Activated CD4-positive, alpha-beta T cell treated with anti-CD3 and anti-CD28 coated beads for 36 hours (primary cell): ENCODE measurements at regions of chr7 and their contacts with region 1.

Region 1: DNA sequence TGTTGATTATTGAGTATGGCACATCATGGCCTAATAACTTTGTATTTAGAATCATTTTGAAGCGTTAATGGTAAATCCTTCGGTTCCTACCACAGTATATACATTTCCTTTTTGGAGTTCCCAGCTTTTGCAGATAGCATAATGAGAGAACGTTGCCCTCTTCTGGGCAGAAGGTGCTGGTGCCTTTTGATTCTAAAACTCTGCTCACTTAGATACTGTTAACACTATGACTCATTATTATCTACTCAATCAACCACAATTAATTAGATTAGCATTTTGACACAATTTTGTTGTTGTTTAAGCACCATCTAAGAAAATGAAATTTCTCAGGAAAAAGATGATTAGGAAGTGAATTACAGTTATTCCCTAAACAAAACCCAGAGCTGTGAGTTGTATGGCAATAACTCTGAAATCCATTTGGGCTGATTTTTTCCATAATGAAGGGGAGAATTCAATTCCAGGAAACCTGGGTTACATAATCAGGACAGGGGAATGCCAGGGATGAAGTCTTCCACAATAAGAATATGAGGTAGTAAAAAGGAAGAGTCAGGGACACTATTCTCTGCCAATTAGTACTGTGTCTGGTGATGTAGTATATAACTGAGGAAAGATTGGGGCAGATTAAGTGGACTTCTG is 11.5 kb upstream of the DLD start:
- DNase-seq: peak; percentile 51
- ATAC-seq: peak; percentile 71
- H3K4me3 Mint-ChIP-seq: no peak overlapping the region
- H3K27ac Mint-ChIP-seq: no peak overlapping the region
- H3K4me1 Mint-ChIP-seq: peaks cover 28% of the 10 kb centered on the region
- H3K27me3 Mint-ChIP-seq: peaks cover 5% of the 10 kb centered on the region

Region 2: DNA sequence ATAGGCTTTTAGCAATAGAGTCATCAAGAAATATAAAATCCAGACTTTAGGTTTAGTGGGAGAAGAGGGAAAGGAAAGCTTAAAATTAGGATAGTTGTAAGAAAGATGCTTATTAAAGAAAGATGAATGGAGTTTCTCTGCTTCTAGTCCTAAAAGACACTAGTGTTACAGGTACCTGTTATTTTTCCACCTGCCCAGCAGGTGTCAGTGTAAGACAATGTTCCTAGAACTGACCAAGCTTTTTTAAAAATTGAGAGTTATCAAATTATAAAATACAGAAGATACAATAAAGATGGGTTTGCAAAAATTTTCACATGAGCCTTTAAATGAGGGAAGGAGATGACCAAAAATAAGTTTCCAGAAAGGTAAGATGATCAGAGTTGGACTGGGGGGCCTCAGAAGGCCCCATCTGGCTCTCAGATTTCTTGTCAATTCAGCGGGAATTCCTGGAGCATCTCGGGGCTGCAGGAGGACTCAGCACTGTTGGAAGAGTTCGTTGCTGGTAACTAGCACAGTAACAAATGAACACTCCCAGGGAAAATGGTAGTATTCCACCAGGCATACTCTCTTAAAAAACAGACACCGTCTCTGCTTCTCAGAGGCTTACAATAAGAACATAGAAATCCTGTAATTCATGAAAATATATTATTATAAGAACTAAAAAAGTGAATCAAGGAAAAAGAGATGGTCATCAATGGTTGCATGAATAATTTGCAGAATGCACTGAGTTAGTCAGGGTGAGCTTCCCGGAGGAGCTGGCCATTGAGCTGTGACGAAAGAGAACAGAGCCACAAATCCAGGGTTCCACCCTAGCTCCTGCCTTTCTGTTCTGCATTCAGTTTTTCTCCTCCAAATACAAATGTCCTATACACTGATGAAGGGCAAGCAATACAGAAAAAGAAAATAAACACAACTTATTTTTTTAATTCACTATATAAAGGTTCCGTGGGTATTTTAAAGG is 1086.2 kb before region 1 on chr7:
- CTCF ChIA-PET with region 1: no interaction called
- POLR2A ChIA-PET with region 1: no interaction called
- intact Hi-C with region 1: loop called in 1 of 2 experiments (anchors 5 kb)
- DNase-seq: peak; percentile 55
- ATAC-seq: peak; percentile 44
- H3K4me3 Mint-ChIP-seq: no peak overlapping the region
- H3K27ac Mint-ChIP-seq: no peak overlapping the region
- H3K4me1 Mint-ChIP-seq: no peaks in the 10 kb centered on the region
- H3K27me3 Mint-ChIP-seq: no peaks in the 10 kb centered on the region

Region 3: GRCh38 chr7:107462740-107463444 is 416.6 kb before region 1 on chr7:
- CTCF ChIA-PET with region 1: interaction called, 12 read pairs
- POLR2A ChIA-PET with region 1: no interaction called
- intact Hi-C with region 1: loop called (anchors 1 to 5 kb)
- DNase-seq: peak; percentile 65
- ATAC-seq: peak; percentile 88
- H3K4me3 Mint-ChIP-seq: no peak overlapping the region
- H3K27ac Mint-ChIP-seq: no peak overlapping the region
- H3K4me1 Mint-ChIP-seq: no peaks in the 10 kb centered on the region
- H3K27me3 Mint-ChIP-seq: no peaks in the 10 kb centered on the region

Region 4: DNA sequence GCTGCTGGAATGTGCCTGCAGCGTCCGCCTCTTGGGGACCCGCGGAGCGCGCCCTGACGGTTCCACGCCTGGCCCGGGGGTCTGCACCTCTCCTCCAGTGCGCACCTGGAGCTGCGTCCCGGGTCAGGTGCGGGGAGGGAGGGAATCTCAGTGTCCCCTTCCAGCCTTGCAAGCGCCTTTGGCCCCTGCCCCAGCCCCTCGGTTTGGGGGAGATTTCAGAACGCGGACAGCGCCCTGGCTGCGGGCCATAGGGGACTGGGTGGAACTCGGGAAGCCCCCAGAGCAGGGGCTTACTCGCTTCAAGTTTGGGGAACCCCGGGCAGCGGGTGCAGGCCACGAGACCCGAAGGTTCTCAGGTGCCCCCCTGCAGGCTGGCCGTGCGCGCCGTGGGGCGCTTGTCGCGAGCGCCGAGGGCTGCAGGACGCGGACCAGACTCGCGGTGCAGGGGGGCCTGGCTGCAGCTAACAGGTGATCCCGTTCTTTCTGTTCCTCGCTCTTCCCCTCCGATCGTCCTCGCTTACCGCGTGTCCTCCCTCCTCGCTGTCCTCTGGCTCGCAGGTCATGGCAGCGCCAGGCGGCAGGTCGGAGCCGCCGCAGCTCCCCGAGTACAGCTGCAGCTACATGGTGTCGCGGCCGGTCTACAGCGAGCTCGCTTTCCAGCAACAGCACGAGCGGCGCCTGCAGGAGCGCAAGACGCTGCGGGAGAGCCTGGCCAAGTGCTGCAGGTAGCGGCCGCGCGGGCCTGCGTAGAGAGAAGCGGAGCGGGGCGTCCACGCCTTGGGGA is 218.2 kb before region 1 on chr7:
- CTCF ChIA-PET with region 1: interaction called, 4 read pairs
- POLR2A ChIA-PET with region 1: no interaction called
- intact Hi-C with region 1: loop called in 1 of 2 experiments (anchors 2 kb)
- DNase-seq: peak; percentile 77
- ATAC-seq: peak; percentile 43
- H3K4me3 Mint-ChIP-seq: peak overlapping the region; percentile 78
- H3K27ac Mint-ChIP-seq: peak overlapping the region; percentile 82
- H3K4me1 Mint-ChIP-seq: peaks cover 31% of the 10 kb centered on the region
- H3K27me3 Mint-ChIP-seq: peaks cover 21% of the 10 kb centered on the region

Region 5: DNA sequence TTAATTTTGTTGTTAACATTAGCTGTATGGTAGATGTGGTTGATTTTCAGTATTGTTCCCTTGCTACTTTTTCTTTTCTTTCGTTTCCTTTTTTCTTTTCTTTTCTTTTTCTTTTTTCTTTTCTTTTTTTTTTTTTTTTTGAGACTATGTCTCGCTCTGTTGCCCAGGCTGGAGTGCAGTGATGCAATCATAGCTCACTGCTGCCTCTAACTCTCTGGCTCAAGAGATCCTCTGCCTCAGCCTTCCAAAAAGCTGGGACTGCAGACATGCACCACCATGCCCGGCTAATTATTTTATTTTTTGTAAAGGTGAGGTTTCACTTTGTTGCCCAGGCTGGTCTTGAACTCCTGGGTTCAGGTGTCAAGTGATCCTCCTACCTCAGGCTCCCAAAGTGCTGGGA is 90.9 kb before region 1 on chr7:
- CTCF ChIA-PET with region 1: interaction called, 4 read pairs
- POLR2A ChIA-PET with region 1: interaction called, 10 read pairs
- intact Hi-C with region 1: no loop called
- DNase-seq: no peak
- ATAC-seq: no peak
- H3K4me3 Mint-ChIP-seq: no peak overlapping the region
- H3K27ac Mint-ChIP-seq: no peak overlapping the region
- H3K4me1 Mint-ChIP-seq: peaks cover 21% of the 10 kb centered on the region
- H3K27me3 Mint-ChIP-seq: peaks cover 3% of the 10 kb centered on the region

Region 6: GRCh38 chr7:107890962-107891635 is 11.6 kb after region 1 on chr7 and contains the start of gene DLD:
- CTCF ChIA-PET with region 1: interaction called, 43 read pairs
- POLR2A ChIA-PET with region 1: no interaction called
- intact Hi-C with region 1: no loop called
- DNase-seq: peak; percentile 97
- ATAC-seq: peak; percentile 98
- H3K4me3 Mint-ChIP-seq: peak within 1 kb of the TSS; percentile 79
- H3K27ac Mint-ChIP-seq: peak within 1 kb of the TSS; percentile 92
- H3K4me1 Mint-ChIP-seq: peaks cover 40% of the 10 kb centered on the region
- H3K27me3 Mint-ChIP-seq: no peaks in the 10 kb centered on the region
- total RNA-seq, gene DLD: 71.4 to 101 TPM

Region 7: DNA sequence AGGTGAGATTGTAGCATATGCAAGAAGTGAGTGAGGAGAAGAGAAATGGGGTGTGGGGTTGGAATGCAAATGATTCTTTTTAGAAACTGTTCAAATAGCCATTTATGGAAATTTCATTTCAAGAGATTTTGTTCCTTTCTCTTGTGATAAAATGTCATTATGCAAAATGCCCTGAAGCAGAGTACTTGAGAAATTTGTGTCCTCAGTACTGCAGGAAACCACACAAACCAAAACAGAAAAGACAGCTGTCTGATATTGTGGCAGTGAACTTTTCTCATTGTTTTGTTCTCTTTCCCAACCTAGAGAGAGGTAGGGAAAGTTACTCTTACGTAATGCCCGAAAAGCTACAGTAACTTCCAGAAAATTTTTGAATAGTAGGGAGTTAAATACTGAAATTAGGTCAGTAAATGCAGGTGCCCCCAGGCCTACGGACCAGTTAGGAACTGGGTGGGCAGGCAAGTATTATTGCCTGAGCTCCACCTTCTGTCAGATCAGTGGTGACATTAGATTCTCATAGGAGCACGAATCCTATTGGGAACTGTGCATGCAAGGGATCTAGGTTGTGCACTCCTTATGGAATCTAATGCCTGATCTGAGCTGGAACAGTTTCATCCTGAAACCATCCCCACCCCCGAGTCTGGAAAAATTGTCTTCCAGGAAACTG is 45.5 kb after region 1 on chr7:
- CTCF ChIA-PET with region 1: no interaction called
- POLR2A ChIA-PET with region 1: no interaction called
- intact Hi-C with region 1: no loop called
- DNase-seq: no peak
- ATAC-seq: no peak
- H3K4me3 Mint-ChIP-seq: no peak overlapping the region
- H3K27ac Mint-ChIP-seq: no peak overlapping the region
- H3K4me1 Mint-ChIP-seq: peaks cover 38% of the 10 kb centered on the region
- H3K27me3 Mint-ChIP-seq: no peaks in the 10 kb centered on the region